Activated B cell treated with CpG ODN at 0.5 μM for 24 hours (primary cell): ENCODE measurements at regions of chr4 and their contacts with region 1.

Region 1: GRCh38 chr4:172489861-172490260 is 676.7 kb downstream of the GALNTL6 start:
- DNase-seq: no peak
- ATAC-seq: no peak
- H3K4me3 Mint-ChIP-seq: no peak overlapping the region
- H3K27ac Mint-ChIP-seq: no peak overlapping the region
- H3K4me1 Mint-ChIP-seq: no peaks in the 10 kb centered on the region
- H3K27me3 Mint-ChIP-seq: no peaks in the 10 kb centered on the region
- CTCF ChIP-seq: no peak

Region 2: GRCh38 chr4:172521680-172522079 is 31.8 kb after region 1 on chr4:
- CTCF ChIA-PET with region 1: no interaction called
- POLR2A ChIA-PET with region 1: no interaction called
- intact Hi-C with region 1: loop called (anchors 2 kb)
- DNase-seq: no peak
- ATAC-seq: no peak
- H3K4me3 Mint-ChIP-seq: no peak overlapping the region
- H3K27ac Mint-ChIP-seq: no peak overlapping the region
- H3K4me1 Mint-ChIP-seq: no peaks in the 10 kb centered on the region
- H3K27me3 Mint-ChIP-seq: no peaks in the 10 kb centered on the region
- CTCF ChIP-seq: no peak